Stomach (tissue), 19 donors: ENCODE measurements at regions of chr12 and their contacts with region 1.

Region 1: GRCh38 chr12:120710031-120710804 is at the start of gene UNC119B:
- DNase-seq: peak; percentile 58 to 88
- H3K4me3 ChIP-seq: peak within 1 kb of the TSS; percentile 87 to 94 (median 90)
- H3K27ac ChIP-seq: peak within 1 kb of the TSS; percentile 89 to 92 (median 91)
- H3K4me1 ChIP-seq: peaks cover 26 to 56% (median 35%) of the 10 kb centered on the region in 4 donors
- H3K27me3 ChIP-seq: no peaks in the 10 kb centered on the region
- CTCF ChIP-seq: no peak
- EP300 ChIP-seq: no peak
- POLR2A ChIP-seq: no peak
- total RNA-seq, gene UNC119B: 8.2 to 26.8 (median 19.7) TPM

Region 2: DNA sequence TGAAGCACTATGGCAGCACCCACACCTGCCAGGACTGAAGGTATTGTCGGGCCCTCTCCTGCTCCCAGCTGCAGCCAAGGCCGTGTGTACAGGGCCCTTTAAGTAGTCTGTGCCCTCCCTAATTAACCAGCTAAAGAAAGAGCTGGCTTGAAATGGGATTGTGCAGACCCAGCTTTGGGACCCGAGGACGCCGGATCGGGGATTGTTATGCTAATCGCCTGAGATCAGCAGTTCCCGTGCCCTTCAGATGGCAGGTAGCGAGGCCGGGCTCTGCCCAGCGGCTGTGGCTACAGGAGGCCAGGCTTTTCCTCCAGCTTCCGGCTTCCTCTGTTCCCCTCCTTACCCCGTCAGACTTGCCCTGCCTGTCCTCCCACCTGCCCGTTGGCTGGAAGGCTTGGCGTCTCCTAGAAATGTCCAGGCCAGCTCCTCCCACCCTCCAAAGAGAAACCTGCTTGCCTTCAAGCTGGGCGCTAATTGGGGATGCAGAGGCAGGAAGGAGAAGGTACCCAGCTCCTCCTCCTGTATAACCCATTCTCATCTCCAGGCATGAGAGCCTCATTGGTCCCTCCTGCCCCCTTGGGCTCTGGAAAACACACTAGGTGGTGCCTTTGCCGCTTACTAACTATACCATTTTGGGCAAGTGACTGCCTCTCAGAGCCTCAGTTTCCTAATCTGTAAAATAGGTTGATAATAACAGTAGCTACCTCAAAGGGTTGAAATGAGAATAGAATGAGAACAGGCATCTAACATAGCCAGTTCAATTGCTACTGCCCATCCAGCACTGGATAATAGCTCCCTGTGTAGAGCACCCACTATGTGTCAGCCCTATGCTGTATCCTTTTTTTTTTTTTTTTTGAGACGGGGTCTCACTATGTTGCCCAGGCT is 315.5 kb before region 1 on chr12:
- intact Hi-C with region 1: no loop called
- DNase-seq: peak; percentile 91 to 93
- H3K4me3 ChIP-seq: peak overlapping the region in 1 of 4 donors; percentile 10
- H3K27ac ChIP-seq: peak overlapping the region; percentile 64 to 86 (median 76)
- H3K4me1 ChIP-seq: peaks cover 4 to 18% (median 8%) of the 10 kb centered on the region in 4 donors
- H3K27me3 ChIP-seq: peaks cover 0 to 49% (median 9%) of the 10 kb centered on the region in 3 donors
- CTCF ChIP-seq: no peak
- EP300 ChIP-seq: no peak
- POLR2A ChIP-seq: peak in 1 of 4 donors; percentile 21

Region 3: DNA sequence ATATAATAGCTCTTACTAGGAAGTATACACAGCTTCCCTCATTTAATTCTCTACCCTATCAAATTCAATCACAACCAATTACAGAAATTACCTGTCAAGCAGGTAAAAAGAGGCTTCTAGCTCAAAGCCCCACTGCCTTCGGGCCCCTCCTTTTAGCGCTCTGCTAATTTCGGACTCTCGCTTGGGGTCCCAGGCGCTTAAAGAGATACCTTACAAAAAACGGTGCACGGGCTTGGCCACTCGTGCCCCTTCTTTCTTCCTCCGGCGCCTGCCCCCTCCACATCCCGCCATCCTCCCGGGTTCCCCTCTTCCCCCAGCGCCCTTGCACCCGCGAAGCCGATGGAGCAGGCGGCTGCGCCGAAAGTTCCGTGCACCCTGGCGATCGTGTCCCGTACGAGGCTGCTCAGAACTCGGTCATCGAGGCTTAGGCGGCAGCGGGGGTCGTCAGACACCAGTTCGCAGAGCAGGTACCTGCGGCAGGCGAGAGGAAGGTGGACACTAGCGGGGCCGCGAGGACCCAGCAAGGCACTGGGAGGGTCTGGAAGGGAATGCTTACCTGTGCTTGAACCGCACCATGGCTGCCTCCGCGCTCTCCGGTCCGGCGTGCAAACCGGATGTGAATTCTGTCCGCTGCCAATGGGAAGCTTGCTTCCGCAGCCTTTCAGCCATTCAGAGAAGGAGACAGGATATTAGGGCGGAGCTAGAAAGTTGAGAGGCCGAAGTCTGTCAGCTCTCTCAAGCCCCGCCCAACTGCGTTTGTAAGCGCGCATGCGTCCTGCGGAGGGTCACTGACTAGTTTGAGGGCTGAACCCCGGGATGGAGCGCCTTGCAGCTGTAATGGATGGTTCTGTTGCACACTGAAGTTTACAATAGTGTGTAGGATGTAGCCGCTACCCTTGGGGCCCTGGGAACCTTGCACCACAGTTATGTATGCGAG is 129.2 kb before region 1 on chr12 and contains the start of gene POP5:
- intact Hi-C with region 1: loop called (anchors 10 kb)
- DNase-seq: peak; percentile 98 to 99
- H3K4me3 ChIP-seq: peak within 1 kb of the TSS; percentile 69 to 94 (median 88)
- H3K27ac ChIP-seq: peak within 1 kb of the TSS; percentile 45 to 85 (median 79)
- H3K4me1 ChIP-seq: peaks cover 20 to 47% (median 39%) of the 10 kb centered on the region in 4 donors
- H3K27me3 ChIP-seq: peaks cover 0 to 10% (median 0%) of the 10 kb centered on the region in 3 donors
- CTCF ChIP-seq: no peak
- EP300 ChIP-seq: no peak
- POLR2A ChIP-seq: no peak
- total RNA-seq, gene POP5: 10.5 to 62.3 (median 34.3) TPM

Region 4: GRCh38 chr12:120649442-120650232 is 60.6 kb before region 1 on chr12:
- intact Hi-C with region 1: loop called (anchors 5 kb)
- DNase-seq: peak in 1 of 2 donors; percentile 67
- H3K4me3 ChIP-seq: peak overlapping the region; percentile 31 to 35 (median 32)
- H3K27ac ChIP-seq: peak overlapping the region in 3 of 5 donors; percentile 44 to 69 (median 64)
- H3K4me1 ChIP-seq: peaks cover 4 to 37% (median 23%) of the 10 kb centered on the region in 4 donors
- H3K27me3 ChIP-seq: peaks cover 0 to 43% (median 8%) of the 10 kb centered on the region in 3 donors
- CTCF ChIP-seq: peak in 1 of 7 experiments; percentile 28
- EP300 ChIP-seq: no peak
- POLR2A ChIP-seq: no peak

Region 5: DNA sequence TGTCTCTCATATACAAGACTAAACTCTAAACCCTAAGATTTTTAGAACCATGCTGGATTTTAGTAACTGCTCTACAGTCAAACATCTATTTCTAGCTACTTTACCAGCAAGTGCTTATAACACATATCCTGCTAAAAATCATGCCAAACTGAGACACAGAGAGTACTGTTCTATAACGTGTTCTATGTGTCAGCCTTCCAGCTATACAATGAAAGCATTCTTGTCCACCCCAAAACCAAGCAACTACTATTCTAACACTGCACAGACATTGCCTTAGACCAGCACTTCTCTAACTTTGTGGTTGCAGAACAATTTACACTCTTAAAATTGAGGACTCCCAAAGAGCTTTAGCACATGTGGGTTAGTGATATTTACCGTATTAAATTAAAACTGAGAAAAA is 108.2 kb after region 1 on chr12:
- intact Hi-C with region 1: no loop called
- DNase-seq: peak in 1 of 2 donors; percentile 33
- H3K4me3 ChIP-seq: no peak overlapping the region
- H3K27ac ChIP-seq: no peak overlapping the region
- H3K4me1 ChIP-seq: peaks cover 0 to 35% (median 17%) of the 10 kb centered on the region in 4 donors
- H3K27me3 ChIP-seq: no peaks in the 10 kb centered on the region
- CTCF ChIP-seq: no peak
- EP300 ChIP-seq: no peak
- POLR2A ChIP-seq: no peak